ENCODE measurements at regions of chr6 and their contacts with region 1.

Region 1: GRCh38 chr6:32796848-32797776 is 19.7 kb downstream of the HLA-DOB start:
- DNase-seq: peak; percentile 54
- H3K4me3 ChIP-seq: peak overlapping the region in 2 of 3 experiments; percentile 19 to 30
- H3K27ac ChIP-seq: no peak overlapping the region
- H3K4me1 ChIP-seq: peaks cover 13% of the 10 kb centered on the region
- H3K27me3 ChIP-seq: no peaks in the 10 kb centered on the region
- CTCF ChIP-seq: peak; percentile 67 to 82

Region 2: GRCh38 chr6:32244946-32245398 is 552.1 kb before region 1 on chr6:
- CTCF ChIA-PET with region 1: no interaction called
- dilution Hi-C with region 1: no loop called
- in situ Hi-C with region 1: loop called in 1 of 2 experiments (anchors 25 kb)
- intact Hi-C with region 1: loop called (anchors 10 kb)
- DNase-seq: peak; percentile 33
- H3K4me3 ChIP-seq: no peak overlapping the region
- H3K27ac ChIP-seq: no peak overlapping the region
- H3K4me1 ChIP-seq: no peaks in the 10 kb centered on the region
- H3K27me3 ChIP-seq: no peaks in the 10 kb centered on the region
- CTCF ChIP-seq: peak; percentile 77 to 88

Region 3: GRCh38 chr6:32816746-32817204 is 19.7 kb after region 1 on chr6 and contains the start of gene HLA-DOB:
- CTCF ChIA-PET with region 1: no interaction called
- dilution Hi-C with region 1: no loop called
- in situ Hi-C with region 1: no loop called
- intact Hi-C with region 1: loop called (anchors 1 kb)
- DNase-seq: peak; percentile 92
- H3K4me3 ChIP-seq: peak within 1 kb of the TSS; percentile 1 to 15 (median 2)
- H3K27ac ChIP-seq: peak within 1 kb of the TSS; percentile 78
- H3K4me1 ChIP-seq: peaks cover 57% of the 10 kb centered on the region
- H3K27me3 ChIP-seq: no peaks in the 10 kb centered on the region
- CTCF ChIP-seq: no peak
- total RNA-seq, gene HLA-DOB: 5.5 to 8.3 TPM

Region 4: DNA sequence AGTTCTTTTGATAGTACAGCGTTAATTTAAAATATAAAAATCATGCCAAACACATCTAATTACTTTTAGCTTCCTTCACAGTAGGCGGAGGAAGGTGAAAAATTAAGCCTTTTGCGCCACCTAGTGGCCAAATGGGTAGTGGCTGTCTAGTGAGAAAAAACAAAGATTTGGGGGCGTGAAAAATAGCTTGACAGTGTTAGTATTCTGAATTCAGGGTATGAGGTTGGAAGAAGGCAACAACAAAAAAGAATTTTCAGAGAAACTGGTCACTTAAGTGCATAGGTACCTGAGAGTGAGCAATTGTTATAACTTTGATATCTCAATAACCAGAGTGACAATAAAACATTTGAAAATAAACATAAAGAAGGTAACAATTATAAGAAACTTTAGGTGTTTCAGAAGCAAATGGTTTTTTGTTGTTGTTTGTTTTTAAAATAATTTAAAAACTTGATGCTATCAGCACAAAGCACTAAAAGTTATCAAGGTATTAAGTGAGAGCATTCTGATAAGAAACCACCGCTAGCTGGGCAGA is 71.2 kb after region 1 on chr6:
- CTCF ChIA-PET with region 1: interaction called, 3 read pairs
- dilution Hi-C with region 1: no loop called
- in situ Hi-C with region 1: no loop called
- intact Hi-C with region 1: loop called (anchors 1 kb)
- DNase-seq: peak; percentile 54
- H3K4me3 ChIP-seq: no peak overlapping the region
- H3K27ac ChIP-seq: no peak overlapping the region
- H3K4me1 ChIP-seq: no peaks in the 10 kb centered on the region
- H3K27me3 ChIP-seq: peaks cover 2% of the 10 kb centered on the region
- CTCF ChIP-seq: peak; percentile 71 to 83

Region 5: DNA sequence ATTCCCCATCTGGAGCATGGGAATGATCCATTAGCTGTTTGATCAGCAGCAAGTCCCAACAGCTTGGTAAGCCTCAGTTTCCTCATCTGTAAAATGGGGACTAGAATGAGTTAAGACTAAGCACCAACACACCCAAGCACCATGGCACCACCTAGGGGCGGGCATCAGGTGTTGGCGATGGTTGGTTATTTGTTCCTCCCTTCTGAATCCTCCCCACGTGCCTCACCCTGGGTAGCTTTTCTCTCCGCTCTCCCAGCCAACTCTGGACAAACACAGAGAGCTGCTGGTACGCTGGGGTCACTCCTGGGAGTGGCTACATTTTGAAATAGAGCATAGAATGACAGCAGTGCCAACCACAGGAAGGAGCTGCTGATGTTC is 810.7 kb after region 1 on chr6:
- CTCF ChIA-PET with region 1: no interaction called
- dilution Hi-C with region 1: no loop called
- in situ Hi-C with region 1: no loop called
- intact Hi-C with region 1: no loop called
- DNase-seq: no peak
- H3K4me3 ChIP-seq: no peak overlapping the region
- H3K27ac ChIP-seq: no peak overlapping the region
- H3K4me1 ChIP-seq: peaks cover 49% of the 10 kb centered on the region
- H3K27me3 ChIP-seq: no peaks in the 10 kb centered on the region
- CTCF ChIP-seq: peak; percentile 37 to 55